Activated CD4-positive, alpha-beta T cell treated with anti-CD3 and anti-CD28 coated beads for 36 hours (primary cell): ENCODE measurements at regions of chr9 and their contacts with region 1.

Region 1: DNA sequence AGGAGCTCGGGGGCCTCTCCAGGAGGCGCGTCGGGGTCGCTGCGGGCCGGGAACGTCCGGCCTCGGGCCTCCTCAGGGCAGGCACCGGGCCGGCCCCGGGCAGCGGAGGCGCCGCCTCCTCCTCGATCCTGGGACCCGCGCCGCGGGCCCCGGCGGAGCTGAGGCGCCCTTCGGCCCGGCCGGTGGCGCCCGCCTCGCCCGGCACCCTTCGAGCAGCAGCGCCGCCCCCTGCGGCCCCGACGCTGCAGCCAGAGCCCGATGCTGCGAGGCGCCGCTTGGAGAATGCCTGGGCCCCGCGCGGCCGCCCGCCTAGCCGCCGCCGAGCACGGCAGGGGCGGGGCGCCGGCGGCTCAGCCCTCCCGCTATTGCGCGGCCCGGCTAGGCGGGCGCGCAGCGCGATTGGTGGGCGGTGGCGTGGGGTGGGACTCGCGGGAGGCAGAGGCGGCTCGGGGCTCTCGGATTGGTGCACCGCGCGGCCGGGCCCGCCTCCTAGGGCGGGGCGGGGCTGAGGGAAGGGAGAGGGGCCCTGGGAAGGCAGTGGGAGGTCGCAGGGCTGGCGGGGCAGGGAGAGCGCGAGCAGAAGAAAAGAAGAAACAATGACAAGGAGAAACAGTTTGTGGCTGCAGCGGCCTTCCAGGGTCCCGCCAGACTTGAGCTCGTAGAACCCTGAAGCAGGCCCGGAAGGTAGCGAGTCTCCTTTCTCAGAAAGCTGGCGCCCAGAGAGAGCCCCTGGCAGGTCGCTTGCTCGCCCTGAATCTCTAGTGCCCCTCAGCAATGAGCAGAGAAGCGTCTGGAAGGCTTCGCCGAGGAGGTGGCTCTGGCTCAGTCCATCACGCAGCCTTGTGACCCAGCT is at the start of gene EEIG1:
- DNase-seq: peak; percentile 99
- ATAC-seq: peak; percentile 87
- H3K4me3 Mint-ChIP-seq: peak within 1 kb of the TSS; percentile 97
- H3K27ac Mint-ChIP-seq: peak within 1 kb of the TSS; percentile 98
- H3K4me1 Mint-ChIP-seq: peaks cover 47% of the 10 kb centered on the region
- H3K27me3 Mint-ChIP-seq: no peaks in the 10 kb centered on the region
- total RNA-seq, gene EEIG1: 56.2 to 58.4 TPM

Region 2: DNA sequence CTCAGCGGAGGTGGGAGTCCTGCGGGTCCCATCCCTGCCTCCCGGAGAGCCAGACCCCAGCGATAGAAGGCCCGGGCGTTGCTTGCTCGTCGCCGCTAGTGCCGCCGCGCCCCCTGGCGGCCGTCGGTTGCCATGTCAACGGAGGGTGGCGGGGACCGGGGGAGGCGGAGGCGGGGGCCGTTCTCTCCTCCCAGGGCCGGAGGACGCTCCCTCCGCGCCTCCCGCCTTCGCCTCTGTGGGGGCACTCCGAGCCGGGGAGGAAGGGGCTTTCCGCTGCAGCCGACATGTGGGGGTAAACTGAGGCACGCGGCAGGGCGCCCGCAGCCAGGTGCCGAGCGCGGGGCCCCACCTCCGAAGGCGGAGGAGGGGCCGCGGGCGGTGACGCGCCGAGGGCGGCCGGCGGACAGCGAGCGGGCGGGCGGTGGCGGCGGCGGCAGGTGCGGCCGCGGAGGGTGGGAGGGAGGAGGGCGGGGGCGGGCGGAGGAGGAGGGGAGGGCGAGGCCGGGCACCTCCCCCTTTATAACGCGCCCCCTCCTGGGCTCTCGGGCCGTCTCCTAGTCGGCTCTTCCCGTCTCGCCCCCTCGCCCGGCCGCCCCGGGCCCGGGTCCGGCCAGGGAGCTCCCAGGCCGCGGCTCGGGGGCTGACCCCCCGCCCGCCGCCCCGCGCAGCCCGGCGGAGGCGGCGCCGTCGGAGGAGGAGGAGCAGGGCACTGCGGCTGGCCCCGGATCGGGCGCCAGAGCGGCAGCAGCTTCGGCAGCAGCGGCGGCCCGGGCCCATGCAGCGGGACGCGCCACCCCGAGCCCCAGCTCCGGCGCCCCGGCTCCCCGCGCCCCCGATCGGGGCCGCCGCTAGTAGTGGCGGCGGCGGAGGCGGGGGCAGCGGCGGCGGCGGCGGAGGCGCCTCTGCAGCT is 195.7 kb before region 1 on chr9:
- CTCF ChIA-PET with region 1: no interaction called
- POLR2A ChIA-PET with region 1: no interaction called
- intact Hi-C with region 1: loop called in 1 of 2 experiments (anchors 5 kb)
- DNase-seq: peak; percentile 93
- ATAC-seq: peak; percentile 34
- H3K4me3 Mint-ChIP-seq: peak overlapping the region; percentile 97
- H3K27ac Mint-ChIP-seq: peak overlapping the region; percentile 97
- H3K4me1 Mint-ChIP-seq: peaks cover 74% of the 10 kb centered on the region
- H3K27me3 Mint-ChIP-seq: no peaks in the 10 kb centered on the region

Region 3: GRCh38 chr9:127943731-127944144 is 37.2 kb before region 1 on chr9:
- CTCF ChIA-PET with region 1: interaction called, 9 read pairs
- POLR2A ChIA-PET with region 1: interaction called, 7 read pairs
- intact Hi-C with region 1: loop called in 1 of 2 experiments (anchors 1 kb)
- DNase-seq: peak; percentile 91
- ATAC-seq: peak; percentile 87
- H3K4me3 Mint-ChIP-seq: no peak overlapping the region
- H3K27ac Mint-ChIP-seq: peak overlapping the region; percentile 81
- H3K4me1 Mint-ChIP-seq: peaks cover 23% of the 10 kb centered on the region
- H3K27me3 Mint-ChIP-seq: no peaks in the 10 kb centered on the region

Region 4: DNA sequence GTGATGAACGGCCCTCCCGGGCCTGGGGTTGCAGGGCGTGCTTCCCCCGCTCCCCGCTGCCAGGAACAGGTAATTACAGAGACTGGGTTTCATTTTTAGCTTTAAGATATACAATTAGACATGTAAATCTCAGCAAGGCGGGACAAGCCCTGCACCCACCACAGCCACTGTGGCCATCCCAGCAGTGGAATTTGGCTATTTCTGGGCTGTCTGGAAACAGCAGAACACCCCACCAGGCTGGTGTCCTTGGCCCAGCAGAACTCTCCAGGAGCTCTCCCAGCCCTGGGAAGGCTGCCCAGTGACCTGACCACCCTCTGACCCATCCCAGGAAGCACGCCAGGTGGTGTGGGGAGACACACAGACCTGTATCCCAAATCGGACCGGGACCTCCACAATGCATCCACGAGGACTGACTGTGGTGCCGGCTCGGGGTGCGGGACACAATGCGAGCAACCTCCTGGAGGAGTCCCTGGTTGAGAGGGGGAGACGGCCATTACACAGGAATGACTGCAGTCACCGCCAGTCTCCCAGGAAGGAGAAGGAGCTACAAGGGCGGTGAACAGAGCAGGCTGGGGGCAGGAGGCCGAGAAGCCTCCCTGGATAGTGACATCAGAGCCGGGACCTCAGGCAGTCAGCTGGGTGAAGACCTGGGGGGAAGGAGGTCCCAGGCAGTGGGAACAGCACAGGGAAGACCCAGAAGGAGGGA is 17.4 kb before region 1 on chr9:
- CTCF ChIA-PET with region 1: interaction called, 4 read pairs
- POLR2A ChIA-PET with region 1: interaction called, 8 read pairs
- intact Hi-C with region 1: loop called in 1 of 2 experiments (anchors 2 kb)
- DNase-seq: peak; percentile 62
- ATAC-seq: peak; percentile 21
- H3K4me3 Mint-ChIP-seq: peak overlapping the region; percentile 70
- H3K27ac Mint-ChIP-seq: peak overlapping the region; percentile 98
- H3K4me1 Mint-ChIP-seq: peaks cover 99% of the 10 kb centered on the region
- H3K27me3 Mint-ChIP-seq: no peaks in the 10 kb centered on the region

Region 5: GRCh38 chr9:128007566-128008138 is 26.7 kb after region 1 on chr9:
- CTCF ChIA-PET with region 1: interaction called, 5 read pairs
- POLR2A ChIA-PET with region 1: interaction called, 3 read pairs
- intact Hi-C with region 1: loop called (anchors 1 kb)
- DNase-seq: peak; percentile 96
- ATAC-seq: peak; percentile 86
- H3K4me3 Mint-ChIP-seq: peak overlapping the region; percentile 81
- H3K27ac Mint-ChIP-seq: peak overlapping the region; percentile 93
- H3K4me1 Mint-ChIP-seq: peaks cover 49% of the 10 kb centered on the region
- H3K27me3 Mint-ChIP-seq: no peaks in the 10 kb centered on the region

Region 6: GRCh38 chr9:128094166-128094967 is 113.4 kb after region 1 on chr9:
- CTCF ChIA-PET with region 1: interaction called, 3 read pairs
- POLR2A ChIA-PET with region 1: no interaction called
- intact Hi-C with region 1: loop called in 1 of 2 experiments (anchors 1 kb)
- DNase-seq: peak; percentile 93
- ATAC-seq: peak; percentile 94
- H3K4me3 Mint-ChIP-seq: peak overlapping the region; percentile 61
- H3K27ac Mint-ChIP-seq: peak overlapping the region; percentile 97
- H3K4me1 Mint-ChIP-seq: peaks cover 84% of the 10 kb centered on the region
- H3K27me3 Mint-ChIP-seq: no peaks in the 10 kb centered on the region